B cell (primary cell): ENCODE measurements at regions of chr4 and their contacts with region 1.

Region 1: DNA sequence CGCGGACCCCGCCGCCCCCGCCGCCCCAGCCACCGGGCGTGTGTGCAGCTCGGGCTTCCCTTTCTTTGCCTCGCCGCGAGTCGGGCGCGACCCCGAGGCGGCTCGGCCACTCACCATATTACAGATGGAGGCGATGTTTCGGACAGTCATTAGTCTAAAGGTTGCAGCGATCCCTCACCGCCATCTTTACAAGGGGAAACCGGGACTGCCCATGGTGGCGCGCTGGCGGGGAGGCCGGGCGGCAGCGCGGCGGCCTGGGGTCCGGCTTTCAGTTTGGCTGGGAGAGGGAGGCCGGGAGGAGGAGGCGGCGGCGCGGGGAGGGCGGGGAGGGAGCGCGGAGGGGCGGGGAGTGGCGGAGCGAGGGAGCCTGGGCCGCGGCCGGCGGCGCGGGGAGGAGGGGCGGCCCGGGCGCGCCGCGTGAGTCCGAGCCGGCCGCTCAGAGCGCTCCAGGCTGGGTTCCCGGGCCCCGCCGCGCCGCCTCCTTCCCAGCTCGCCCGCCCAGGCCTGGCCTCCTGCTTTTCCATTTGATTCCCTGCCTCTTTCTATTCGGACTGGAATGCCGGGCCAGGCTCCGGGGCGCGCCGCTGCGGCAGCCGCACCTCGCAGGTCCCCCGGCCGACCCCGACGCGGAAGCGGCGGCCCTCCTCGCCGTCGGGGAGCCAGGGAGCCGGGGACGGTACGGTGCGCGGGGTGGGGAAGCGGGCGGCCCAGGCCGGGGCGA is at the start of gene USP46:
- DNase-seq: peak; percentile 70
- ATAC-seq: peak; percentile 90
- H3K4me3 ChIP-seq: peak within 1 kb of the TSS; percentile 52 to 86 (median 77)
- H3K4me3 Mint-ChIP-seq: peak within 1 kb of the TSS; percentile 92
- H3K27ac ChIP-seq: peak within 1 kb of the TSS in 1 of 2 donors; percentile 57
- H3K27ac Mint-ChIP-seq: peak within 1 kb of the TSS; percentile 91
- H3K4me1 ChIP-seq: peaks cover 10 to 14% of the 10 kb centered on the region in 2 donors
- H3K4me1 Mint-ChIP-seq: peaks cover 25% of the 10 kb centered on the region
- H3K27me3 ChIP-seq: no peaks in the 10 kb centered on the region
- H3K27me3 Mint-ChIP-seq: no peaks in the 10 kb centered on the region
- CTCF ChIP-seq: no peak
- total RNA-seq, gene USP46: 10.0 and 11.8 TPM in 2 replicates

Region 2: DNA sequence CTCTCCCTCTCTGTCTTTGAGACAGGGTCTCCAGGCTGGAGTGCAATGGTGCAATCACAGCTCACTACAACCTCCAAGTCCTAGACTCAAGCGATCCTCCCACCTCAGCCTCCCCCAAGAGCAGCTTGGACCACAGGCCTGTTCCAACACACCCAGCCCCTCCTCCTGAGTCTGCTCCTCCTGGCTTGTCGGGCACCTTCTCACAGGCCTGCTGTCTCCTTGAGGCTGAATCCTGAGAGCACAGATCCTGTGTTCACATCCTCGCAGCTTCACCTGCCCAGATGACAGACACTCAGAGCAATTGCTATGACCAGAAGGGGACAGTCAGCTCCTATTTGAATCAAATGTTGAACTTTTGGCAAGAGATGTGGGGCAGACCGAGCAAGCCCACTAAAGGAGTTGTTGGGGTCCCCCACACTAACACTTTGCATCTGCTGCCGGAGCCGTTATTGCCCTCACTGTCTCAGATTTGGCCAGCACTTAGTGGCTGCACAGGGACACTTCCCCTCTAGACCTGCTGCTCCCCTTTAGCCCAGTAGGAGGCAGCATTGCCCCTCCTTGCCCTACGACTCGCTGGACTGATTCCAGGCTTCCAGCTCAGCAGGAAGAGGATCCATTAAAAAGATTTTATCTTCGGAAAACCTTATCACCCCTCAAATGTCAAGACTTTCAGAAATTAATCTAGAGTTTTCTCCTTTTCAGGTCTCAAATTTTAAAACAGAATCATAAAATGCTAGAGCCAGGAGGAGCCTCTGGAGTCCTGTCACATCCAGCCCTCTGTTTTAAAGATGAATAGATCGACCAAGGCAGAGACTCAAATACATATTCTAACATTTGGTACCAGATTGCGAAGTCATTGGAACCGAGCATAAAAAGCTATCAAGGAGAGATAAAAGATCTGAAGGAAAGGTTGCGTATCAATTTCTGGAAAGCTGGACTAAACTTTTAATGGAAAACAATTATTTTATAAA is 113.8 kb before region 1 on chr4:
- CTCF ChIA-PET with region 1: interaction called, 6 read pairs
- POLR2A ChIA-PET with region 1: no interaction called
- intact Hi-C with region 1: loop called (anchors 10 kb)
- DNase-seq: peak; percentile 64
- ATAC-seq: peak; percentile 43
- H3K4me3 ChIP-seq: no peak overlapping the region
- H3K4me3 Mint-ChIP-seq: no peak overlapping the region
- H3K27ac ChIP-seq: no peak overlapping the region
- H3K27ac Mint-ChIP-seq: no peak overlapping the region
- H3K4me1 ChIP-seq: no peaks in the 10 kb centered on the region
- H3K4me1 Mint-ChIP-seq: no peaks in the 10 kb centered on the region
- H3K27me3 ChIP-seq: peaks cover 0 to 4% (median 0%) of the 10 kb centered on the region in 4 experiments
- H3K27me3 Mint-ChIP-seq: peaks cover 12% of the 10 kb centered on the region
- CTCF ChIP-seq: peak; percentile 88

Region 3: GRCh38 chr4:52617336-52618020 is 41.7 kb before region 1 on chr4:
- CTCF ChIA-PET with region 1: no interaction called
- POLR2A ChIA-PET with region 1: no interaction called
- intact Hi-C with region 1: no loop called
- DNase-seq: no peak
- ATAC-seq: no peak
- H3K4me3 ChIP-seq: no peak overlapping the region
- H3K4me3 Mint-ChIP-seq: no peak overlapping the region
- H3K27ac ChIP-seq: no peak overlapping the region
- H3K27ac Mint-ChIP-seq: no peak overlapping the region
- H3K4me1 ChIP-seq: no peaks in the 10 kb centered on the region
- H3K4me1 Mint-ChIP-seq: no peaks in the 10 kb centered on the region
- H3K27me3 ChIP-seq: no peaks in the 10 kb centered on the region
- H3K27me3 Mint-ChIP-seq: no peaks in the 10 kb centered on the region
- CTCF ChIP-seq: no peak

Region 4: DNA sequence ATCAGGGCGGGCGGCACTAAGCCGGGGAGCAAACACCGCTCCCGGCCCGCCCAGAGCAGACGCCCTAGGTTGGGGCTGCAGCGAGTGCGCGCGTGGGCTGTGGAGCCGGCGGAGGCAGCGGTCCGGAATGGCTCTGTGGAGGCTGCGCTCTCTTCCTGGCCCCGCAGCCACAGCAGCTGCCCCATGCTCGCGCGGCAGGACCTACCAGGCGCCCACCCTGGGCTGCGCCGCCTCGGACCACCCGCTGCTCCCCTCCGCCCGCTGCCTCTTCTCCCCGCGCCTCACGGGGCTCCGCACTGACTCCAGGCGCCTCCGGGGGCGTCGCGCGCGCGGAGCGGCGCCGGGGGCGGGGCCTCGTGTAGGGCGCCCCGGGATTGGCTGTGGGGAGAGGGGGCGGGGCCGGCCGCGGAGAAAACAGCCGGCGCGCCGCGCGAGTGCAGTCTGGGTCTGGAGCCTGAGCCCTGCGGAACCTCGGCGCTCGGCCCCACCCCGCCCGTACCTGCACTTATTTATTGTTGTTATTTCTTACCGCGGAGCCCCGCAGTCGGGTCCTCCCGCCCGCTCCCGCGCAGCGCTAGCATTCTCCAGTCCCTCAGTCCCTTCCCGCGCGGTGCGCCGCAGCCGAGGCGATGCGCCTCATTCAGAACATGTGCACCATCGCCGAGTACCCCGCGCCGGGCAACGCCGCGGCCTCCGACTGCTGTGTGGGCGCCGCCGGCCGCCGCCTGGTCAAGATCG is 202.9 kb after region 1 on chr4 and contains the start of gene RASL11B:
- CTCF ChIA-PET with region 1: no interaction called
- POLR2A ChIA-PET with region 1: no interaction called
- intact Hi-C with region 1: loop called (anchors 2 kb)
- DNase-seq: peak; percentile 92
- ATAC-seq: peak; percentile 99
- H3K4me3 ChIP-seq: peak within 1 kb of the TSS; percentile 48 to 71 (median 58)
- H3K4me3 Mint-ChIP-seq: peak within 1 kb of the TSS; percentile 89
- H3K27ac ChIP-seq: no peak within 1 kb of the TSS
- H3K27ac Mint-ChIP-seq: no peak within 1 kb of the TSS
- H3K4me1 ChIP-seq: peaks cover 11 to 14% of the 10 kb centered on the region in 2 donors
- H3K4me1 Mint-ChIP-seq: peaks cover 14% of the 10 kb centered on the region
- H3K27me3 ChIP-seq: peaks cover 0 to 37% (median 15%) of the 10 kb centered on the region in 4 experiments
- H3K27me3 Mint-ChIP-seq: peaks cover 40% of the 10 kb centered on the region
- CTCF ChIP-seq: peak; percentile 44
- total RNA-seq, gene RASL11B: 1.2 and 1.3 TPM in 2 replicates